ENCODE measurements at regions of chr10 and their contacts with region 1.

Region 1: GRCh38 chr10:78543749-78544362 is 510.2 kb downstream of the RPS24 start:
- DNase-seq: peak; percentile 80
- H3K4me3 ChIP-seq: no peak overlapping the region
- H3K27me3 ChIP-seq: peaks cover 4% of the 10 kb centered on the region
- CTCF ChIP-seq: no peak

Region 2: GRCh38 chr10:78706256-78706655 is 162.4 kb after region 1 on chr10:
- CTCF ChIA-PET with region 1: no interaction called
- POLR2A ChIA-PET with region 1: interaction called, 27 read pairs
- DNase-seq: no peak
- H3K4me3 ChIP-seq: no peak overlapping the region
- H3K27me3 ChIP-seq: peaks cover 5% of the 10 kb centered on the region; the same call in 1 of the 2 replicates
- CTCF ChIP-seq: no peak

Measured in BJ (cell line).